Left colon (tissue), 2 donors: ENCODE measurements at regions of chr11 and their contacts with region 1.

Region 1: DNA sequence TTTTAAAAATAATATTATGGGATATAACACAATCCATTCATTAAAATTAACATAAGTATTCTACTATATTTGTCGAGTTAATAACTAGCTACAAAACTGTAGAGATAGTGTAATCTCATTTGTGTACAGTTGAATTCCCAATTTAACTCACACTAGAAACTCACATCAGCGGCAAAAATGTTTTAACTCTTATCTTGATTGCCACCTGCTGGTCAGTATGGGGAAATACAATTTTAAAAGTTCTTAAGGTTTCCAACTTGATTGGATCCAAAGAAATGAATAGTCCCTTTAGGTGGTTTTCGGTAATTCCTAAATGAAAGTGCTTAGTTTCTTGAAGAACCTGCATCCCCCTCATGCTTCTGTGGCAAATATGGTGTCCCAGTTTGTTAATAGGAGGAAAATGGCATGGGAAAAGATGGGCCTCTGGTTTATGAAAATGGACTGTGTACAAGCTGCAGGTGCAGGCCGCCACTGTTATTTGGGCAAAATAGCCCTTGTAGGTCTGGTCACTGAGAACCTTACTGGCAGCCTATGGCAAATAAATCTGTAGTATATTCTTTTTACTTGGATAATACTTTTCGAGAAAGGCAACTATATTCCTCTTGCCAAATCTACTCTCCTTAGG is 33.7 kb upstream of the SLC17A6 start:
- DNase-seq: no peak
- ATAC-seq: no peak

Region 2: DNA sequence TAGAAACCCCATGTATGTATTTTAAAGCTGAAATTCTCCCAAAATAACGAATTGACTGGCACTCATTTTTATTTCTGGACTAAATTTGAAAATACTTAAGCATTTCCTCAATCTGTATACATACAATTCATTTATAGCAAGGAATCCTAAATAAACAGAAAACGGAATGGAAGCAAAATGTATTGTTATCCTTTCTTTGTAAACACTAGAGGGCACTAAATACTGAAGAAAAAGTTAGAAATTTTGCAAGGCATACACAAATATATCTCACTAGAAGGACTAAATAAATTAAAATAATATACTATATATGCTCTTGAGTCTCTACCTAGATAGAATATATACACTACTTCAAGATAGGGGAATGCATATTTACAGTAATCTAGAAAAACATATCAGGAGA is 134.6 kb before region 1 on chr11:
- intact Hi-C with region 1: loop called in 1 of 2 experiments (anchors 5 kb)
- DNase-seq: no peak
- ATAC-seq: no peak

Region 3: DNA sequence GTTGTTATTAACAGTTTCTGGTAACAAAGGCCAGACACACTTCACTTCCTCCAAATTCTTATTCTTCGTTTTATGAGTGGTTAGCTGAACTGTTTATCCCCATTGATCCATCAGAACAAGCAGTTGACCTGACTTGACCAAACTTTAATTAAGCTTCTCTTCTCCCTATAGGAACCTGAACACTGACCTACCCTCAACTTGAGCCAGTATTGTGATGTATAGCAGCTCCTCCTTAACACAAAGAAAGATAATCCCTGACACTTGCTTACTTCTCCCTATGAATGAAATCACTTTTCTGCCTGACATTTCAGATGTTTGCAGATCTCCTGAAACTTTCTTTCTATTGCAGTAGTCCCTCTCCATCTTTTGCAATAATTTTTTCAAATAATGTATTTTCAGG is 69.7 kb before region 1 on chr11:
- intact Hi-C with region 1: no loop called
- DNase-seq: no peak
- ATAC-seq: no peak

Region 4: DNA sequence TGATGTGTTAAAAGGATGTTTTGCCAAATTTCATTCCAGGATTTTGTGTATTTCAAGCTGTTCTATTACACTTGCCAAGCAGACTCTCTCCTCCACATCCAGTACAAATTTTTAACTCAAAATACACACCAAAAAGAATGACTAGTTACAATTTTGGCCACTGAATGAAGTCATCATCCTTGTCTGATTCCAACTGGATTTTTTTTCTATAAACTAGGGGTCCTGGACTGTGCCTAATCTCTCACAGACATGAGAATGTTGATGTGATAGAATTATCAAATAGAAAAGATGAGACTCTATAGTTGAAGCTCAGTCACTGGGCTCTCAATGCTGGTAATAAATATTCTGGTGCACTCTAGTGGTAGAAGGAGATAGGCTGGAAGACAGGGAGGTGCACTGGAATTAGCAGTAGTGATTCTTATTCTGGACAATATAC is 235.4 kb after region 1 on chr11:
- intact Hi-C with region 1: no loop called
- DNase-seq: no peak
- ATAC-seq: no peak